Activated CD8-positive, alpha-beta memory T cell treated with anti-CD3 and anti-CD28 coated beads, Interleukin-2, amount 10 ng/mL, durations not matched to agents 7 days and 5 days (primary cell): ENCODE measurements at regions of chr5 and their contacts with region 1.

Region 1: DNA sequence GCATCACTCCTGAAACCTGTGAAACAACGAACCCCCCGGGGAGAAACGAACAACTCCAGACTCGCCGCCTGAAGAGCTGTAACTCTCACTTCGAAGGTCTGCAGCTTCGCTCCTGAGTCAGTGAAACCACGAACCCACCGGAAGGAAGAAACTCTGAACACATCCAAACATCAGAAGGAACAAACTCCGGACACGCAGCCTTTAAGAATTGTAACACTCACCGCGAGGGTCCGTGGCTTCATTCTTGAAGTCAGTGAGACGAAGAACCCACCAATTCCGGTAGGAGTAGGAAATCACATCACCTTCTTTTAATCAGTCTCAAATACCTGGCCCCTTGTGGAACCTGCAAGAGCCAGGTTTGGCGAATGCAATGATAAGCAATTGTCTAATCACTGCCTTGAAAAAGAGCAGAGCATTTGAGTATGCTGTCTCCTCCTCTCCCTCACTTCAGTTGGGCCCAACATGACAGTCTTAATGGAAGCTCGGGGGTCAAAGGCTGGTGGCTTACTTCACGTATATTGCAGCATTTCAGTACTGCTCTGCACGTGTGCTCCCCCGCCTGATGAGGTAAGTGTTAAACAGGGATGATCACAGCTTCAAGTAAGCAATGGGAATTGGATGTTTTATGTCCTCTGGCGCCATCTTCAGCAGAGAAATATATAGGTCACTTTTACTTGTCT is 473 bp downstream of the IRGM start:
- DNase-seq: peak; percentile 82
- ATAC-seq: peak; percentile 96
- H3K4me3 Mint-ChIP-seq: peak overlapping the region; percentile 73
- H3K27ac Mint-ChIP-seq: peak overlapping the region; percentile 93
- H3K4me1 Mint-ChIP-seq: peaks cover 31% of the 10 kb centered on the region
- H3K27me3 Mint-ChIP-seq: no peaks in the 10 kb centered on the region

Region 2: DNA sequence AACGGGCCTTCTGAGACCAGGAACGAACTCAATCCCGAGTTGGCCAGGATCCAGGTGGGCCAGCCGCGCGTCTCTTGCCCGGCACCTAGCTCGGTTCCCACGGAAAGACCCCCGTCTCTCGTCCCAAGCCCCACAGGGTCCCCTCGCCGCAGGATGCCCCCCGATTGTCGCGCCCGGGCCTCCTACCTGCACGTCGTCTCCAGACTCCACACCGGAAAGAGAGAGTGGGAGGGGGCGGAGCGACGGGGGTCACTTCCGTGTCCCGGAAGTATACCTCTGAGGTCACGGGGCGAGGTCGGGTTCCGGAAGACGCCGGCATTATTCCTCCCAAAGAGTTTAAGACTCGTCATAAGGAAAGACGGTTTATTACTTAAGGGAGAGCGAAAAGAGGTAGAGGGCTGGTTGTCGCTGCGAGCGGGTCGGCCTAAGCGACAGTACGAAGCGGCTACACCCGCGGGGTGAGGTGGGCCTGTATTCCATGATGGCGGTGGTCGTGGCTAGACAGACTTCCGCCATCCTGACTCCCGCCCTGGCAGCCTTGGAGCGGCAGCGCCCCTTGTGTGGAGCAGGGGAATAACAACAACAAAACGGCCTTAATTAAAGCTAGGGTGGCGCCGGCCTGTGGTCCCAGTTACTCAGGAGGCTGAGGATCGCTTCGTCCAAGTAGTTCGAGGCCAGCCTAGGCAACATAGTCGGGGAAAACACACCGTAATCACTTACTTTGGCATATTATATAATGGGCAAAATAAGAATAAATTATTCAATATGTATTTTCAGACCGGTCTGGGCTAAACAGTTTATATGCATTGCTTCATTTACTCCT is 397.1 kb before region 1 on chr5 and contains the start of gene RPS14:
- CTCF ChIA-PET with region 1: interaction called, 10 read pairs
- DNase-seq: peak; percentile 97
- ATAC-seq: peak; percentile 94
- H3K4me3 Mint-ChIP-seq: peak within 1 kb of the TSS; percentile 96
- H3K27ac Mint-ChIP-seq: peak within 1 kb of the TSS; percentile 99
- H3K4me1 Mint-ChIP-seq: peaks cover 34% of the 10 kb centered on the region
- H3K27me3 Mint-ChIP-seq: no peaks in the 10 kb centered on the region
- total RNA-seq, gene RPS14: 1,980 to 2,218 TPM

Region 3: GRCh38 chr5:150560401-150561193 is 286.2 kb before region 1 on chr5:
- CTCF ChIA-PET with region 1: interaction called, 68 read pairs
- DNase-seq: peak; percentile 90
- ATAC-seq: peak; percentile 92
- H3K4me3 Mint-ChIP-seq: no peak overlapping the region
- H3K27ac Mint-ChIP-seq: no peak overlapping the region
- H3K4me1 Mint-ChIP-seq: no peaks in the 10 kb centered on the region
- H3K27me3 Mint-ChIP-seq: peaks cover 3% of the 10 kb centered on the region

Region 4: GRCh38 chr5:150700594-150701293 is 146.1 kb before region 1 on chr5 and contains the start of gene RBM22:
- CTCF ChIA-PET with region 1: interaction called, 36 read pairs
- DNase-seq: peak; percentile 95
- ATAC-seq: peak; percentile 97
- H3K4me3 Mint-ChIP-seq: no peak within 1 kb of the TSS
- H3K27ac Mint-ChIP-seq: no peak within 1 kb of the TSS
- H3K4me1 Mint-ChIP-seq: peaks cover 7% of the 10 kb centered on the region
- H3K27me3 Mint-ChIP-seq: no peaks in the 10 kb centered on the region
- total RNA-seq, gene RBM22: 63.3 to 78.7 TPM

Region 5: DNA sequence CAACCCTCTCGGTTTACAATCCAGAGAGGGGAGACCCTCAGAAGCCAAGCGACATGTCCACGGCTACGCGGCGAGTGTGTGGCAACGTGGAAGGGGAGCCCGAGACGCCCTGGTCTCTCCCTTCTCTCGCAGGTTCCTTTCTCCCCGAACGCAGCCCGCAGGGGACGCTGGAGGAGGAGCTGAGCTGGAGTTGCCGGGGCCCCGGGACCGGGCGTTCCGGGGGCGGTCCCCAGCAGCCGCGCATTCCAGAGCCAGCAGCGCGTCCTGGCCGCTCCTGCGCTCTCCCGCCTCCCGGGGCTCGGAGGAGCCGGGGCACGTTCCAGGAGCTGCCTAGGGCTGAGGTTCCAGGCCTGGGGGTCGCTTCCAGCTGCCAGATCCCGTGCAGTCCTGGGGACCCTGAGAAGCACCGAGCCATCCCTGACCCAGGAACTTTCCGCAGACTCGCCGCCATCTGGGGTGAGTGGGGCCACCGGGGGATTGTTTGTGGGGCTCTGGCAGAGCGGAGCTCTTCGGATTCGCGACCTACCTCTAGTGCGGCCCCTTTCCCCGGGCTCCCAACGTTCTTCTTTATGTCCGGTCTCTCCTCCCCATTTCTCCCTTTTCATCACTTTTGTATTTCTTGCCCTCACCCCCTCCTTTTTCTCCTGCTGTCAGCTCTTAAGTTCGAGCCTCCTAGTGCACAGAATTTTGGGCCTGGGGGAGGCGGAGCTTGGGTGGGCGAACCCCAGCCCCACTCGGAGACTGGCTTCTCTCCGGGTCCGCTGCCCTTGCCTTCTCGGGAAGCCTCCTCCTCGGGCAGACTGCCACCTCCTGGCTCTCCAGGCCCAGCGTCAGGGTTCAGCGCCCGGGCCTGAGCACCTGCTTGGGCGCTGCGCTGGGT is 68.0 kb before region 1 on chr5 and contains the start of gene SMIM3:
- CTCF ChIA-PET with region 1: interaction called, 33 read pairs
- DNase-seq: peak; percentile 83
- ATAC-seq: peak; percentile 66
- H3K4me3 Mint-ChIP-seq: peak within 1 kb of the TSS; percentile 99
- H3K27ac Mint-ChIP-seq: peak within 1 kb of the TSS; percentile 94
- H3K4me1 Mint-ChIP-seq: peaks cover 65% of the 10 kb centered on the region
- H3K27me3 Mint-ChIP-seq: no peaks in the 10 kb centered on the region
- total RNA-seq, gene SMIM3: 22.1 to 37.5 TPM

Region 6: DNA sequence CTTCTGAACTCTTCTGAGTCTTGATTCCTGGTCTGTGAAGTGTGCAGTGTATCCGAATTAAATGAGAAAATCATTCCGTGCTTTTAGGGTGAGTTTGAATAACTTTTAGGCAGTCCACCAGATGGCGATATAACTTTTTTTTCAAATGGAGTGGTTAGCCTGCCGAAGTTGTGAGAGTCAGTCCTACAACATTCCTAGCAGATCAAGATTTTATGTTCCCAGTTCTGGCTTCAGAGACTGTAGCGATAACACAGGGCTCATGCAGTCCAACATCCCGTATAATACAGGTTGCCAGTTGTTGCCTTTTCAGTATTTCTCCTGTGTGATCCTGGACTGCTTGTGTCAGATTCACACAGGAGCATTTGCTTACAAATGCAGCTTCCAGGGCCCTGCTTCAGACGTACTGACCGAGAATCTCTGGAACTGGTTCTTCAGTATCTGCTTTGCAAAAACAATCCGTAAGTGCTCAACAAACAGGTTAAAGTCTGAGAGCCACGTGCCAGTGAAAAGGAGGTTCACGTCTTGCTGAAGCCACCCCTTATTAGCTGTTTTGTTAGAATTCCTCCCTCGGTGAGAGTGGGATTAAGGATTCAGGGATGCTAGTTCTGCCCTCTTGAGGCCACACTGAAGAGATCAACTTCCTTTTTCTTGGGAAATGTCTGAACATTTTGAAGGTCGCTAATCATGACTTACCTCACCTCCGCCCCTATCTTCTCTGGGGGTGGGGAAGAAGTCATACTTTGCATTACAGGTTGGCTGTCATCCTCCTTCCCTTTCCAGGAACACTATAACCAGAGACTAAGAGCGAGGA is 45.5 kb before region 1 on chr5:
- CTCF ChIA-PET with region 1: interaction called, 55 read pairs
- DNase-seq: no peak
- ATAC-seq: peak; percentile 53
- H3K4me3 Mint-ChIP-seq: no peak overlapping the region
- H3K27ac Mint-ChIP-seq: no peak overlapping the region
- H3K4me1 Mint-ChIP-seq: peaks cover 9% of the 10 kb centered on the region
- H3K27me3 Mint-ChIP-seq: peaks cover 17% of the 10 kb centered on the region

Region 7: GRCh38 chr5:151093476-151093889 is 246.7 kb after region 1 on chr5:
- CTCF ChIA-PET with region 1: no interaction called
- DNase-seq: no peak
- ATAC-seq: peak; percentile 7
- H3K4me3 Mint-ChIP-seq: peak overlapping the region; percentile 53
- H3K27ac Mint-ChIP-seq: peak overlapping the region; percentile 85
- H3K4me1 Mint-ChIP-seq: peaks cover 61% of the 10 kb centered on the region
- H3K27me3 Mint-ChIP-seq: peaks cover 30% of the 10 kb centered on the region